Ovary (tissue), 10 donors: ENCODE measurements at regions of chr10 and their contacts with region 1.

Region 1: DNA sequence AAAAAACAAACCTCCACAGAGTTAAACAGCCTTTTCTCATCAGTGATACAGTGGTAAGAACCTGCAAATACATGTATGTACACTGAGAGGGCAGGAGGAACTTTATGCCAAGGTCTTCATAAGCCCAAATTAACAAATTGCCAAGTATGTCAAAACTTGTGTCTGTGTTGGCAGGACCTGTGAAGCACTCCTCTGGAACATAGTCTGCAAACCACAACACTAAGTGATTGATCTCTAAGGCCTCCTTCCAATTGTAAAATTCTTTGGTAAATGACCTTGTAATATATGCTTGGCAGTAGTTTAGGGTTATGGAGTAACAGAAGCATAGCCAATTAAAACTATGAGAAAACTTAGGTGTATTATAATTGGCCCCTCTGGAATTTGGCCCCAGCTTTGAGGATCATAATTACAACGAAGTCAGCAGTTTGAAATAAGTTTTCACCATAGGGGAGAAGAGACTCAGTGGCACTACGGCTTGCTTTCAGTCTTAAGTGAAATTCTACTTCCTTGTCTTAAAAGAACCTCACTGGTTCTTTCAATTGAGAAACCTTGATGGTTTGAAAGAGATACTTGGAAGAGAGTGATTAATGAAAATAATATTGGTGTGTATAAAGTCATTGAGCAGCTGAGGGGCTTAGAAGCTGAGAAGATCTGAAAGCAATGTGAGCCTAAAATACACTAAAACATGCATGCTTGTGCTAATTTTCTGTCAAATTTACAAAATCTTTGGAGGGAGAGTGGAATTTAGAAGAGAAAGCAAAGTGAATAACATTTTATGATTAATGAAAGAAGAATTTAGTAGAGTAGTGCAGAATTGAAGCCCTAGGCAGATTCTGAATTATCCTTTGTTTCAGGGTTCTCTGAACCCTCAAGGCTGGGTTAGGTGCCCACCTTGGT is 57.6 kb downstream of the CNNM2 start:
- DNase-seq: no peak
- H3K4me3 ChIP-seq: no peak overlapping the region
- H3K27ac ChIP-seq: peak overlapping the region in 1 of 2 donors; percentile 29
- H3K4me1 ChIP-seq: no peaks in the 10 kb centered on the region
- H3K27me3 ChIP-seq: no peaks in the 10 kb centered on the region
- CTCF ChIP-seq: no peak
- EP300 ChIP-seq: no peak
- POLR2A ChIP-seq: no peak

Region 2: DNA sequence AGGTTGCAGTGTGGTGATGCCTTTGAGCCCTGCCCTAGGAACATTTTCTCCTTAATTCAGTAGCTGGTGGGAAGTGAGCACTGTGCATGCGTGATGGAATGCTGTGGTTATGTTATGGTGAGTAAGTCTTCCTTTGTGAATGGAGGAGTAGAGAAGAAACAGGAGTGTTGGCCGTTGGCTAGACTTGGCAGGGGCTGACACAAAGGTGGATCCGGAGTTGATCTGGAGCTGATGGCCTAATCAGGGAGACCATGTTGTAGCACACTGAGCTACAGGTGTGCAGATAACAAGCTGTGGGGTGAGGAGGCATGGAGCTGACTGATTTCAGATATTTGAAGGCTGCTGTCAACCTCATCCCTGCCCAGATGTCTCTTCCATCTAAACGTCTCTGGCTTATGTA is 64.7 kb after region 1 on chr10:
- intact Hi-C with region 1: loop called in 1 of 4 experiments (anchors 10 kb)
- DNase-seq: no peak
- H3K4me3 ChIP-seq: no peak overlapping the region
- H3K27ac ChIP-seq: no peak overlapping the region
- H3K4me1 ChIP-seq: peaks cover 11% of the 10 kb centered on the region
- H3K27me3 ChIP-seq: no peaks in the 10 kb centered on the region
- CTCF ChIP-seq: no peak
- EP300 ChIP-seq: no peak
- POLR2A ChIP-seq: no peak